HAP-1 (cell line): ENCODE measurements at regions of chr6 and their contacts with region 1.

Region 1: GRCh38 chr6:84227434-84228197 is at the start of gene CEP162:
- DNase-seq: peak; percentile 81 to 93
- H3K4me3 ChIP-seq: peak within 1 kb of the TSS; percentile 65
- H3K4me1 ChIP-seq: peaks cover 5% of the 10 kb centered on the region
- H3K27me3 ChIP-seq: no peaks in the 10 kb centered on the region; the same call in 1 of the 2 replicates

Region 2: GRCh38 chr6:83884523-83884922 is 343.1 kb before region 1 on chr6:
- in situ Hi-C with region 1: loop called (anchors 10 kb)
- DNase-seq: peak in 1 of 2 experiments; percentile 65
- H3K4me3 ChIP-seq: no peak overlapping the region
- H3K4me1 ChIP-seq: no peaks in the 10 kb centered on the region
- H3K27me3 ChIP-seq: no peaks in the 10 kb centered on the region